Activated naive CD4-positive, alpha-beta T cell treated with anti-CD3 and anti-CD28 coated beads for 36 hours (primary cell): ENCODE measurements at regions of chr11 and their contacts with region 1.

Region 1: DNA sequence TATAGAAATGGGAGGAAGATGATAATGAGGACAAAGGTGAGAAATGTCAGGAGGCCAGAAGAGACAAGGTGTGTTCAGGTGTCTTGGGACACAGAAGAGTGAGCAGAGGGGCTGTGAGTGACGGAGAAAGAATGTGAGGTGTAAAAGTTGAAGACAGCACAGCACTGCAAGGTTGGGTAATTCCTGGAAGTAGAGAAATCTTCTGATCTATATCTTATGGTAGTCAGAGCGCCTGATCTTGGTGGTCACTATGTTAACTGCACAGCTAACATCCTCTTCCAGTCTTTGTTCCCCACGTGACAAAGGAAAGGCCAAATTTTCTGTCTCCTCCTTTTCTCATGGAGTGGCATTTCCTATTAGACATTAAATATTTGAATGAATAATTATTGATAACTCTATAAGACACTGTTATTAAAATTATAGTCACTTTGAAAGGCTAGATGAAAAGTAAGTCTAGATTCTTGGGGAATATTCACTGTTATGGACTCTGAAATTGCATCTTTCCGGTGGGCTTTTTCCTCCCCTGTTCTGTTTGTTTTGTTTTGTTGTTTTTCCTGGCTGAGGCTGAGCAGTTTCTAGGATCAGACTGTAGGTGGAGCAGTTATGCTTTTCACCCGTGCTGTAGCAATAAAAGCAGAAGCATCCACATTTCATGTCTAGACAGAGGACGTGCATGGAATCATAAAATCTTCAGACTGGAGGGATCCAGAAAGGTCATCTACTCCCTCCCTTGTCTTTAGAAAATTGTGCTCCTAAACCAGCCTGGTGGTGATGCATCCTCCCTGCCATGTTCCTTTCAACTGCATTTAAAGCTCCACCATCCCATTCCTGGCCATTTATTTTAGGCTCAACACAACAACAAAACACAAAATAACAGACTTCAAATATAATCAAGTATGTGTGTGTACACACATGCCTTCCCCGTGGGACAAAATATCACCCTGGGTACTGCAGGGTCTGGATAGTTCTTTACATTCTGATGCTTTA is 26.6 kb downstream of the SC5D start:
- DNase-seq: peak; percentile 40
- H3K4me3 Mint-ChIP-seq: no peak overlapping the region
- H3K27ac Mint-ChIP-seq: no peak overlapping the region
- H3K4me1 Mint-ChIP-seq: peaks cover 13% of the 10 kb centered on the region
- H3K27me3 Mint-ChIP-seq: no peaks in the 10 kb centered on the region

Region 2: GRCh38 chr11:121376130-121376529 is 57.0 kb after region 1 on chr11:
- CTCF ChIA-PET with region 1: no interaction called
- intact Hi-C with region 1: no loop called
- DNase-seq: no peak
- H3K4me3 Mint-ChIP-seq: no peak overlapping the region
- H3K27ac Mint-ChIP-seq: no peak overlapping the region
- H3K4me1 Mint-ChIP-seq: peaks cover 72% of the 10 kb centered on the region
- H3K27me3 Mint-ChIP-seq: no peaks in the 10 kb centered on the region

Region 3: DNA sequence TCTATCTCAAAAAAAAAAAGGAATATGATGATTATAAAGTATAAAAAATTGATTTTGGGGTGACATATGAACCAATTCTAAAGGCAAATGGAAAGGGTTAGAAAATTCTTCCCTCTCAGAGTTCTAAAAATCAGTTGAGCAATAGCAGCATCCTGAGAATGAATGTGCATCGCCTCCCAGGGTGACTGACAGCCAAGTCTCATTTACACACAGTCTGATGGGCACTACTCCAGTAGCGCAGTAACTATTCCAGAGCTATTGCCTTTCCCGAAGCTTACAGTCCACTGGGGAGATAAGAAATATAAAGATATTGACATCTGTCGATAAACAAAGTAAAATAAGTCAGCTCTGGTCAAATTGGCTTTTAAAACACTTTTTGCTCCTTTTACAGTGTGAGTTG is 100.7 kb after region 1 on chr11:
- CTCF ChIA-PET with region 1: no interaction called
- intact Hi-C with region 1: loop called (anchors 1 kb)
- DNase-seq: no peak
- H3K4me3 Mint-ChIP-seq: no peak overlapping the region
- H3K27ac Mint-ChIP-seq: no peak overlapping the region
- H3K4me1 Mint-ChIP-seq: peaks cover 74% of the 10 kb centered on the region
- H3K27me3 Mint-ChIP-seq: no peaks in the 10 kb centered on the region

Region 4: DNA sequence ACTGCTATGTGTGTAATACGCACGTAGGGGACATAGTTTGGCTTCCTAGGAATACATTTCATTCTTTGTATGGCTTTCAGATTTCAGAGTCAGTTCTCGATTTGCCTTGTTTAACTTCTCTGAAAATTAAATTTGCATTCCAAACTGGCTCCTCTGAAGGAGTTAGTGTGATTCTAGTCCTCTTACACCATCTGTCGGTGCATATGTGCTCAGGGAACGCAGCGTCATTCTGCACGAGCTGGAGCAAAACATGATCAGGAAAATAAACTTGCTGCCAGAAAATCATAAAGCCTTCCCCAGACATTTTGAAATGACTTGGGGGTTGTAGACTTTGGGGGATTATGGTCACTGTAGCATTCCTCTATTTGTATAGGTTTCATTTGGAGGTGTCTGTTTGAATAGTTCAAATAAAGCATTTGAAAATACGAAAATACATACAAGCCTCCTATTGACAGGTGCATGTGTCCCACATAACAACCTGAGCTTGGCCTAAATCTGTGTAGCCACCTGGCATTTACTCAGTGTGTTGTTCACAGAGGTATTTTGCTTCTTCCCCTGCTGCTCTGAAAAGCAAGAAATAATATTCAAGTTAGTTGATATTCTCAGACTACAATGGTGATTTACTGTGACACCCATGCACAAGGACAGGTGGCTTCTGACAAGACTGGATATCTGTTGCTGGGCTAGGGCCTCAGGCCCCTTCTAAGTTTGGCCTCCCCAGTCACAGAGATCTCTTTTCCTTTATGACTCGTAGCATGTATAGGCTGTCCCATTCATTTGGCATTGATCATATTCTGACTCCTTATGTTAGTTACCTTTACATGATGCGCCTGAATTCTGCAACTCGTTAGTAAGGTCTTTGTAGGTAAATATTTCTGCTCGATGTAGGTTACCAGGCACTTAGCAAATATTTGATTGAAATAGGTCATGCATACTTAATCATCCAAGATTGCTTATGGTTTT is 215.3 kb after region 1 on chr11:
- CTCF ChIA-PET with region 1: no interaction called
- intact Hi-C with region 1: loop called (anchors 5 kb)
- DNase-seq: no peak
- H3K4me3 Mint-ChIP-seq: no peak overlapping the region
- H3K27ac Mint-ChIP-seq: no peak overlapping the region
- H3K4me1 Mint-ChIP-seq: peaks cover 60% of the 10 kb centered on the region
- H3K27me3 Mint-ChIP-seq: no peaks in the 10 kb centered on the region

Region 5: DNA sequence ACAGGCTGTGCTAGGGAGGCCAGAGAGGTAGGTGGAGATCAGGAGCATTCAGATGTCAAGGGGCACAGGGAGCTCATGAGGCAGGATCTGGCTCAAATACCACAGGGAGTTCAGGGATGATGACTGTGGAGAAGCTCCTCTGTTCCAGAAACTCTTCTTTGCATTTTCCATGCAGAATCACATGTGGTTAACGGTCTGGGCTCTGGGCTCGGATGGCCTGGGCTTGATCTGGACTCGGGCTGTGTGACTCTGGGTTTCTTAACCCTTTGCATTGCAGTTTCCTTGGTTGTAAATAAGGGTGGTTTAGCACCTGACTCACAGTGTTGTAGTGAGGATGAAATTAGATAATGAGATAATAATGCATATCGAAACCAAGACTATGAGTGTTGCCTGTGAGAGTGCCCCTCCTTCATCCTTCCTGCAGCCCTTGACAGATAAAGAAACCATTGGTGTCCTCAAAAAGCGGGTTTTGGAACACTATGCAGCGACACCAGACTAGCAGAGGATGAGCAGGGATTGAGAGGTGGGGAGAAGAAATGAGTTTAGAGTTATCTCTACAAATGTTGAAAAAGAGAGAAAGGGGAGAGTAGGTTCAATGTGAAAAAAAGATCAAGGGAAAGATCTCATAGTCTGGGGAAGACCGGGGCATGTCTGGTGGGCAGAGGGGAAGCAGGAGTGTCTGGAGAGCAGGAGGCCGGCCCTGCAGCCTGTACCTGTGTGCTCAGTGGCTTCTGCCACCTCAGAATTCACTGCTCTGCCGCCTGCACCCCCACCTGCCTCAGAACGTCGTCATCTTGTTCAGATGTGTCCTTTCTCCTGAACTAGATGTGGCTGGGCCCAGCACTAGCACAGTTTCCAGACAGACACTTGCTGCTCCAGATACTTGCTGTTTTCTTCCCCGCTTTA is 331.5 kb after region 1 on chr11:
- CTCF ChIA-PET with region 1: interaction called, 6 read pairs
- intact Hi-C with region 1: loop called (anchors 1 kb)
- DNase-seq: peak; percentile 33
- H3K4me3 Mint-ChIP-seq: no peak overlapping the region
- H3K27ac Mint-ChIP-seq: peak overlapping the region; percentile 8
- H3K4me1 Mint-ChIP-seq: peaks cover 28% of the 10 kb centered on the region
- H3K27me3 Mint-ChIP-seq: peaks cover 6% of the 10 kb centered on the region

Region 6: DNA sequence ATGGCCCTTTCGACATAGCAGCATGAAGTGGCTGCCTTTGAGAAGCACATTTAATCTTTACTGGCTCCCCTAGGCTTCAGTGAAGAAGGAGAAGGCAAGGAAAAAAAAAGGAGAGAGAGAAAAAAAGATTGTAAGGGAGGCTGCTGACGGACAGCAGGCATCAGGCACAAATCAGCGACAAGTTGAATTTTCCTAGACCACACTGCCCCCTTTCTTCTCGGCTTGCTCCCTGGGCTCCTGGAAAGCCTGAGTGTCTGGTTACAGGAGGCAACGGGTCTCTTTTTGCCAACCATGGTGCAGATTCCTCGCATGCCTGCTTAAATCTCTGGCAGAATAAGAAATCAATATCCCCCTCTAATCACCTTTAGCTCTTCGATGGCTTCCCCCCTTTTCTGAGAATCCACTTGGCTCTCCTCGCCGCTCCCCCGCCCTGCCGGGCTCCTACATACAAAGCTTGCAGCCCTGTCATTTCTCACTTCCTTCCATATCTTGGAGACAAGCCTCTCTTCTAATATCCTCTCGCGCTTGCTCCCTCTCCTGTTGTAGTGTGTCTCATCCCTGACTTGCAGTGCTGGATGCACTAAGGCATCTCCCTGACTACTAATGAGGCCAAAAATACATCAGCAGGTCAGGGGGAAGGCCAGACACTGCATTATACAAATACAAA is 782.6 kb after region 1 on chr11:
- CTCF ChIA-PET with region 1: no interaction called
- intact Hi-C with region 1: loop called (anchors 5 kb)
- DNase-seq: no peak
- H3K4me3 Mint-ChIP-seq: no peak overlapping the region
- H3K27ac Mint-ChIP-seq: no peak overlapping the region
- H3K4me1 Mint-ChIP-seq: peaks cover 11% of the 10 kb centered on the region
- H3K27me3 Mint-ChIP-seq: peaks cover 29% of the 10 kb centered on the region

Region 7: GRCh38 chr11:122505304-122506006 is 1186.3 kb after region 1 on chr11:
- CTCF ChIA-PET with region 1: no interaction called
- intact Hi-C with region 1: loop called (anchors 5 kb)
- DNase-seq: peak; percentile 75
- H3K4me3 Mint-ChIP-seq: no peak overlapping the region
- H3K27ac Mint-ChIP-seq: no peak overlapping the region
- H3K4me1 Mint-ChIP-seq: no peaks in the 10 kb centered on the region
- H3K27me3 Mint-ChIP-seq: peaks cover 30% of the 10 kb centered on the region